MCF 10A (cell line): ENCODE measurements at regions of chr5 and their contacts with region 1.

Region 1: DNA sequence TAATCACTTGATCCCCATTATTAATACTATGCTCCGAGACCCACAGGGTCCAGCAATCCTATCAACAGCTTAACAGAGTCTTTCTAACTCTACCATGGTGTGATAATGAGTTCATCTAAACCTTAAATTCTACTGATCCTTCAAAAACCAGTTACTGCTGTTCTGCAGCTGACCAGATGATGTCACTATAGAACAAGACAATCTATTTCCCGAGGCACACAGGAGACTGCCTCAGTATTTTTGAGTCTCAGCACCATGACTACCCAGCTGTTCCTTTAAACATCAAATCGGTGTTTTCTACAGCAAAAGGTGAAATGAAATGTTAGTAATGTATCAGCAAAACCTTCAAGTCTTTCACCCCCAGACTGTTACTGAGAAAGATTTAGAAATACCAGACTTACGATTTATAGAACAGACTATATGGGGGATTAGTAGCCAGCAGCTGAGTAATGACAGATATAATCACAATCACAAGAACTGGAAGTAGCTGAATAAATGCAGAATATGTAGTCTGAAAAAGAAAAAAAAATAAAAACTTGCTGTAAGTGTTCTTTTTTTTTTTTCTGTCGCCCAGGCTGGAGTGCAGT is 16.9 kb downstream of the DNAJC18 start:
- DNase-seq: peak; percentile 84
- H3K4me3 Mint-ChIP-seq: no peak overlapping the region
- H3K27ac Mint-ChIP-seq: peak overlapping the region; percentile 57
- H3K4me1 Mint-ChIP-seq: no peaks in the 10 kb centered on the region
- H3K27me3 Mint-ChIP-seq: no peaks in the 10 kb centered on the region
- CTCF ChIP-seq: peak; percentile 93

Region 2: GRCh38 chr5:139439013-139439903 is 16.9 kb after region 1 on chr5 and contains the start of gene DNAJC18:
- CTCF ChIA-PET with region 1: interaction called, 44 read pairs
- POLR2A ChIA-PET with region 1: interaction called, 6 read pairs
- intact Hi-C with region 1: no loop called
- DNase-seq: peak; percentile 92
- H3K4me3 Mint-ChIP-seq: peak within 1 kb of the TSS; percentile 89
- H3K27ac Mint-ChIP-seq: peak within 1 kb of the TSS; percentile 96
- H3K4me1 Mint-ChIP-seq: peaks cover 11% of the 10 kb centered on the region
- H3K27me3 Mint-ChIP-seq: no peaks in the 10 kb centered on the region
- CTCF ChIP-seq: no peak
- total RNA-seq, gene DNAJC18: 14.1 and 15.1 TPM in 2 replicates

Region 3: DNA sequence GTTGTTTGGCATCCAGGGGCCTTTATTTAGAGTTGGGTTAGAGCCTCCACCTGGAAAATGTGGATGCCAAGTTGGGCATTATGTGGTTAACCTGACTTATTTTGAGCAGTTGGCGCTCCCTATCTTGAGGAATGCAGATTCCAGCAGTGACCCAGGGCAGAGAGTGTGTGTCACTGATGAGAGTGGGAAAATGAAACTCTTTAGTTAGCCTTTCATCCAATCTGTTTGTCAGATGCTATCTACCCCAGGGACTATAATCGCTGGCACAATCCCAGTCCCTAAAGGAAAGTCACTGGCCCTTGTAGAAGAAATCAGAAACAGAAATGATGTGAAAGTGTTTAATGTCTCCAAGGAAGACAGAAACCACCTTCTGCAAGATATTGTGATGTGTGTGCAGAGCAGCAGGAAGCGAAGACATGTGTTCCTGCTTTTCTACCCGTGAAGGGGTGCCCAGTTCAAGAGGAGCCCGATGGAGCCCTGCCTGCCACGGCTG is 70.3 kb after region 1 on chr5:
- CTCF ChIA-PET with region 1: interaction called, 28 read pairs
- POLR2A ChIA-PET with region 1: no interaction called
- intact Hi-C with region 1: no loop called
- DNase-seq: peak; percentile 24
- H3K4me3 Mint-ChIP-seq: no peak overlapping the region
- H3K27ac Mint-ChIP-seq: no peak overlapping the region
- H3K4me1 Mint-ChIP-seq: peaks cover 9% of the 10 kb centered on the region
- H3K27me3 Mint-ChIP-seq: no peaks in the 10 kb centered on the region
- CTCF ChIP-seq: no peak

Region 4: DNA sequence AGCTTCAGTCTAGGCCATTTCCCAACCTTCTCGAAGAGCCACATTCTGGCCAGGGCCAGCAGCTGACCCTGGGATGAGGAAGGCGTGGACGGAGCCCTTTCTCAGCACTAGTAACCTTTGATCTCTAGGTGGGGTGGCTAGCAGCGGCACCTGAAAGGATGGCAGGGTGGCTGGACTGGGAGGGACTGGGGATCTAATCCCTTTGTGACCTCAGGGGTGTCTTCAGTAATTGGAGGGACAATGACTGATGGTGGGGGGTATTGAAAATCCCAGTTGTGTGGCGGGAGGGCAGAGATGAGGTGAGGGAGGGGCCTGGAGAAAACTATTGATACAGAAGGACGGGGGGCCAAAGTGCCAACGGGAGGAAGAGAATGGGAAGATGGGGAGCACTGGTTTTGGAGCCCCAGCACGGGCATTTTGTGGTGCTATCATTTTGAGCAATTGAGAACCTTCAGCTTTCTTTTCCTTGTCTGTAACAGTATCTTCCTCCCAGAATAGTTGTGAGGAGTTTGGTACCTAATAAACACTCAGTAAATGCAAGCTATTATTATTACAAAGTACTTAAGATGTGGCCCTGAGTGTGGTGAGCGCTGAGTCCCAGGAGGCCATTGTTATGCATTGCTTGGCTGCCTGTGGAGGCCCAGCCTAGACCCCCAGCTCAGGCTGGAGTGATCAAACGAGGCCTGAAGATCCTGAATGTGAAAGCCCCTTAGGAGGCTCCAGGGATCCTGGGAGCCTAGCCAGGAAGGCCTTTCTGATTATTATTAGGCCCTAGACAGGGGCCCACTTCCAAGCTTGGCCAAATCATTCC is 101.4 kb after region 1 on chr5:
- CTCF ChIA-PET with region 1: interaction called, 19 read pairs
- POLR2A ChIA-PET with region 1: no interaction called
- intact Hi-C with region 1: no loop called
- DNase-seq: no peak
- H3K4me3 Mint-ChIP-seq: no peak overlapping the region
- H3K27ac Mint-ChIP-seq: no peak overlapping the region
- H3K4me1 Mint-ChIP-seq: peaks cover 2% of the 10 kb centered on the region
- H3K27me3 Mint-ChIP-seq: no peaks in the 10 kb centered on the region
- CTCF ChIP-seq: no peak